Activated CD4-positive, alpha-beta memory T cell treated with anti-CD3 and anti-CD28 coated beads, Interleukin-2, amount 10 ng/mL, durations not matched to agents 7 days and 5 days (primary cell): ENCODE measurements at regions of chrX and their contacts with region 1.

Region 1: GRCh38 chrX:23901805-23902204 is 5.9 kb downstream of the APOO start:
- DNase-seq: peak; percentile 48
- H3K4me3 Mint-ChIP-seq: no peak overlapping the region
- H3K27ac Mint-ChIP-seq: no peak overlapping the region
- H3K4me1 Mint-ChIP-seq: peaks cover 26% of the 10 kb centered on the region
- H3K27me3 Mint-ChIP-seq: no peaks in the 10 kb centered on the region

Region 2: GRCh38 chrX:23694606-23695005 is 207.2 kb before region 1 on chrX:
- CTCF ChIA-PET with region 1: interaction called, 78 read pairs
- POLR2A ChIA-PET with region 1: interaction called, 4 read pairs
- DNase-seq: peak; percentile 44
- H3K4me3 Mint-ChIP-seq: no peak overlapping the region
- H3K27ac Mint-ChIP-seq: no peak overlapping the region
- H3K4me1 Mint-ChIP-seq: no peaks in the 10 kb centered on the region
- H3K27me3 Mint-ChIP-seq: no peaks in the 10 kb centered on the region

Region 3: GRCh38 chrX:23756157-23756559 is 145.6 kb before region 1 on chrX:
- CTCF ChIA-PET with region 1: interaction called, 19 read pairs
- POLR2A ChIA-PET with region 1: no interaction called
- DNase-seq: peak; percentile 72
- H3K4me3 Mint-ChIP-seq: no peak overlapping the region
- H3K27ac Mint-ChIP-seq: no peak overlapping the region
- H3K4me1 Mint-ChIP-seq: peaks cover 8% of the 10 kb centered on the region
- H3K27me3 Mint-ChIP-seq: no peaks in the 10 kb centered on the region

Region 4: DNA sequence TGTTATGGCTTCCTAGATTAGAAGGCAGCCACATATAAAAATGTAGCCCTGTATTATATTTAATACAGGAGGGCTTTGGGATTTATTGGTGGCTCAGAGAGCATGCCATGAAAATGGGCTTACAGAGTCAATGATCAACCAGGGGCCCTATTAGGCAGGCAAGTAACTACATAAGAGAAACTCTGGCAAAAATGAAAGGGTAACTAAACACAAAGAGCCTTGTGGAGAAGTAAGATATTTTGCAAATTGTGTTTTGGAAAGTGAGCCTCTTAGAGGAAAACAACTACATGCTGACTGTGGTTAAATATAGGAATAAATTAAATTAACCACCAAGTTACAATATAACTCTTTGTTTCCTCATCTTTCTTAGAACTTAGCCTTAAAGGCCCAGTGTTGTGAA is 113.3 kb before region 1 on chrX:
- CTCF ChIA-PET with region 1: interaction called, 80 read pairs
- POLR2A ChIA-PET with region 1: interaction called, 44 read pairs
- DNase-seq: no peak
- H3K4me3 Mint-ChIP-seq: no peak overlapping the region
- H3K27ac Mint-ChIP-seq: no peak overlapping the region
- H3K4me1 Mint-ChIP-seq: peaks cover 22% of the 10 kb centered on the region
- H3K27me3 Mint-ChIP-seq: no peaks in the 10 kb centered on the region

Region 5: DNA sequence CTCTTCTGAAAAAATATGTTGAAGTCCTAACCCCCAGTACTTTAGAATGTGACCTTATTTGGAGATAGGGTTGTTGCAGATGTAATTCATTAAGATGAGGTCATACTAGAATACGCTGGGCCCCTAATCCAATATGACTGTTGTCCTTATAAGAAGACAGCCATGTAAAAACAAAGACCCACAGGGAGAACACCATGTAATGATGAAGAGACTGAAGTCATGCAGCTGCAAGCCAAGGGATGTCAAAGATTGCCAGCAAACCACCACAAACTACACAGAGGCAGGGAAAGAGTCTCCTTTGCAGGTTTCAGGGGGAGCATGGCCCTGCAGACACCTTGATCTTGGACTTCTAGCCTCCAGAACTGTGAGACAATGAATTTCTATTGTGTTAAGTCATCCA is 43.4 kb after region 1 on chrX:
- CTCF ChIA-PET with region 1: no interaction called
- POLR2A ChIA-PET with region 1: no interaction called
- DNase-seq: no peak
- H3K4me3 Mint-ChIP-seq: no peak overlapping the region
- H3K27ac Mint-ChIP-seq: no peak overlapping the region
- H3K4me1 Mint-ChIP-seq: peaks cover 1% of the 10 kb centered on the region
- H3K27me3 Mint-ChIP-seq: no peaks in the 10 kb centered on the region

Region 6: GRCh38 chrX:24100713-24101112 is 198.9 kb after region 1 on chrX:
- CTCF ChIA-PET with region 1: no interaction called
- POLR2A ChIA-PET with region 1: no interaction called
- DNase-seq: no peak
- H3K4me3 Mint-ChIP-seq: no peak overlapping the region
- H3K27ac Mint-ChIP-seq: peak overlapping the region; percentile 18
- H3K4me1 Mint-ChIP-seq: peaks cover 21% of the 10 kb centered on the region
- H3K27me3 Mint-ChIP-seq: no peaks in the 10 kb centered on the region